ENCODE measurements at regions of chr2 and their contacts with region 1.

Region 1: DNA sequence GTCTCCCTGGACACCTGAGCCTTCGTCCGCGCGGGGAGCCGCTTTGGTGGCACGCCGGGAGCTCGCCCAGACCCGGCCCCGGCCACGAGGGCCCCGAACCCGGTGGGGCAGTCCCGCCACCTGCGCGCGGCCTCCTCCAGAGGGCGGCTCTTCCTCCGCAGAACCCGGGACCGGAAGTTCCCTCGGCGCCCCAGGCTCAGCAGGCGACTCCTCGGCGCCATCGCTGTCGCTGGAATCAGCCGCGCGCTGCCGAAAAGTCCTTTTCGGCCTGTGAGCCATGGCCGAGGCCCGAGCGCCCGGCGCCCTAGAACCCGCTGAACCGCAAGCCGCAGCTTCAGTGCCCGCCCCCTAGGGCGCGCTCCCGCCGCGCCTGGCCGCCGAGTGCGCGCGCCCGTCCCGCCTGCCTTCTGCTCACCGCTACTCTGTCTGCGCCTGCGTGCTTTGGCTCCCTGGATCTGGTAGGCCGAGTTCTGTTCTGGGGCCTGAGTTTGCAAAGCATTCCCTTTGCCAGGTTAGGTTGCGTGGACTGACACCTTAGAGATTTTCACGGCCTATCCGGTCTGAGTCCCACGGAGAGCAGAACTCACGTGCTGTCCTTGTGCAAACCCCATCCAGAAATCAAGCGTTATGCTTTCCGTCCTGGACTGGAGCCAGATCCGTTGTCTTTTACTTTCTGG is at the start of gene GCFC2:
- DNase-seq: peak; percentile 87
- H3K4me3 Mint-ChIP-seq: peak within 1 kb of the TSS; percentile 88
- H3K27ac Mint-ChIP-seq: peak within 1 kb of the TSS; percentile 92
- H3K4me1 Mint-ChIP-seq: peaks cover 34% of the 10 kb centered on the region
- H3K27me3 Mint-ChIP-seq: peaks cover 1% of the 10 kb centered on the region
- total RNA-seq, gene GCFC2: 20.4 to 21.6 TPM

Region 2: GRCh38 chr2:75627895-75628504 is 82.7 kb before region 1 on chr2:
- CTCF ChIA-PET with region 1: no interaction called
- POLR2A ChIA-PET with region 1: no interaction called
- DNase-seq: peak; percentile 61
- H3K4me3 Mint-ChIP-seq: no peak overlapping the region
- H3K27ac Mint-ChIP-seq: no peak overlapping the region
- H3K4me1 Mint-ChIP-seq: no peaks in the 10 kb centered on the region
- H3K27me3 Mint-ChIP-seq: peaks cover 26% of the 10 kb centered on the region

Region 3: DNA sequence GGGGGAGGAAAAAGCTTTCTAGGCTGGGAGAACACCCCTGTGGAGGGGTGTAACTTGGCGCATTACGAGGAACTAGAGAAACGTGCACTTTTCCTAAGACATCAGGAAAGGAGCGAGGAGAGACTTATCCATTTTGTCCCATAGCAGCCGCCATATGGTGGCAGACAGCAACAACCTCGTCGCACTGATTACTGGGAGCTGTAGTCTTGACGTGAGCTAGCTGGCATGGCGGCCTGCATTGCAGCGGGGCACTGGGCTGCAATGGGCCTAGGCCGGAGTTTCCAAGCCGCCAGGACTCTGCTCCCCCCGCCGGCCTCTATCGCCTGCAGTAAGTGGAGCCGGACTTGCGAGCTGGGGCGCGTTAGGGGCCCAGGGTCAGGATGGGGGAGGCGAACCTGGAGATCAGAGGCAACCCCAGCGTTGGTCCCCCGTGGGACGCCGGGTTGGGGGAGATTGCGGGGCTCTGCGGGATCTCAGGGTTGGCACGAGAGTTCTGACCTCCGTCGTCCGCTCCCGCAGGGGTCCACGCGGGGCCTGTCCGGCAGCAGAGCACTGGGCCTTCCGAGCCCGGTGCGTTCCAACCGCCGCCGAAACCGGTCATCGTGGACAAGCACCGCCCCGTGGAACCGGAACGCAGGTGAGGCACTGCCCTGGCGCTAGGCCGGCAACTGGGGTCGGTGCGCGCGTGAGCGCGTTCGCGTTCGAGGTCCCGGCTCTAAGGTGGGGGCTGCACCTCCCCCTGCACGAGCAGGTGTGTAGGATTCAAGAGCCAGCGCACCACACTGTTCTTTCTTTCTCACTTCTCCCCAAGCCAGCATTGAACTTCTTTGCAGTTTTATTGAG is 63.9 kb before region 1 on chr2 and contains the start of gene MRPL19:
- CTCF ChIA-PET with region 1: interaction called, 7 read pairs
- POLR2A ChIA-PET with region 1: interaction called, 11 read pairs
- DNase-seq: peak; percentile 78
- H3K4me3 Mint-ChIP-seq: peak within 1 kb of the TSS; percentile 89
- H3K27ac Mint-ChIP-seq: peak within 1 kb of the TSS; percentile 83
- H3K4me1 Mint-ChIP-seq: peaks cover 27% of the 10 kb centered on the region
- H3K27me3 Mint-ChIP-seq: peaks cover 2% of the 10 kb centered on the region
- total RNA-seq, gene MRPL19: 37.7 to 41.6 TPM